Activated B cell treated with CpG ODN at 0.5 μM for 24 hours (primary cell): ENCODE measurements at regions of chr3 and their contacts with region 1.

Region 1: GRCh38 chr3:197186887-197187588 is 111.4 kb downstream of the DLG1 start:
- DNase-seq: no peak
- ATAC-seq: peak; percentile 61
- H3K4me3 Mint-ChIP-seq: no peak overlapping the region
- H3K27ac Mint-ChIP-seq: no peak overlapping the region
- H3K4me1 Mint-ChIP-seq: peaks cover 4% of the 10 kb centered on the region
- H3K27me3 Mint-ChIP-seq: no peaks in the 10 kb centered on the region
- CTCF ChIP-seq: no peak

Region 2: DNA sequence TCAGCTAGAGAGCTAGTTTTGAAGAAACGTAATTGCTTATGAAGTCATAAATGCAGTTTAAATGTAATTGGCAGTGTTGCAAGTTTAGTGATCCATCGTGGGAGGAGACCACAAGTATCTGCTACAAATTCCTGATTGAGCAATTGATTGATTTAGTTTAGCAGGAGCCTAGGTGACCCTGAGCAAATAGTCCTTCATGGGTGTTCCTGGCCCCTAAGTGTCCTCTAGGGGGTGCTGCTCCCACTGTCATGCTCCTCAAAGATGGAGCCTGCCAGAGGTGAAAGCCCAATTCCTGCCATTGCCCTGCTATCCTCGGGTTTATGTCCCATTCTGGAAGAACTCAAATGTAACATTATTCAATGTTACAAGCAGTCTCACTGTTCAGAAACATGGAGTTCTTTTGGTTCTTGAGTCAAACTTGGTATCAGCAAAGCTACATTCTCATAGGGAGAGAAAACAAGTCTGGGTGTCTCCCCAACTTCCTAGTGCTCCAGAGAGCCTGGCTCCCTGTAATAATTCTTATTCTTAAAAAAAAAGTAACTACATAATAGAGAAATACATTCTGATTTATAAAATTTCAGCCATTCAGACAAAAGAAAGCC is 349.1 kb before region 1 on chr3:
- CTCF ChIA-PET with region 1: interaction called, 4 read pairs
- POLR2A ChIA-PET with region 1: no interaction called
- intact Hi-C with region 1: loop called (anchors 1 kb)
- DNase-seq: peak; percentile 36
- ATAC-seq: peak; percentile 93
- H3K4me3 Mint-ChIP-seq: no peak overlapping the region
- H3K27ac Mint-ChIP-seq: no peak overlapping the region
- H3K4me1 Mint-ChIP-seq: no peaks in the 10 kb centered on the region
- H3K27me3 Mint-ChIP-seq: no peaks in the 10 kb centered on the region
- CTCF ChIP-seq: no peak

Region 3: GRCh38 chr3:196979545-196979944 is 207.5 kb before region 1 on chr3:
- CTCF ChIA-PET with region 1: interaction called, 17 read pairs
- POLR2A ChIA-PET with region 1: interaction called, 3 read pairs
- intact Hi-C with region 1: loop called (anchors 1 kb)
- DNase-seq: no peak
- ATAC-seq: no peak
- H3K4me3 Mint-ChIP-seq: no peak overlapping the region
- H3K27ac Mint-ChIP-seq: no peak overlapping the region
- H3K4me1 Mint-ChIP-seq: peaks cover 11% of the 10 kb centered on the region
- H3K27me3 Mint-ChIP-seq: peaks cover 21% of the 10 kb centered on the region
- CTCF ChIP-seq: no peak

Region 4: GRCh38 chr3:197029511-197030167 is 157.4 kb before region 1 on chr3 and contains the start of gene MELTF:
- CTCF ChIA-PET with region 1: interaction called, 6 read pairs
- POLR2A ChIA-PET with region 1: no interaction called
- intact Hi-C with region 1: loop called (anchors 1 kb)
- DNase-seq: peak; percentile 83
- ATAC-seq: peak; percentile 73
- H3K4me3 Mint-ChIP-seq: peak within 1 kb of the TSS; percentile 82
- H3K27ac Mint-ChIP-seq: peak within 1 kb of the TSS; percentile 56
- H3K4me1 Mint-ChIP-seq: peaks cover 23% of the 10 kb centered on the region
- H3K27me3 Mint-ChIP-seq: peaks cover 24% of the 10 kb centered on the region
- CTCF ChIP-seq: peak; percentile 93
- total RNA-seq, gene MELTF: 50.0 and 61.5 TPM in 2 replicates